ENCODE measurements at regions of chr17 and their contacts with region 1.

Region 1: DNA sequence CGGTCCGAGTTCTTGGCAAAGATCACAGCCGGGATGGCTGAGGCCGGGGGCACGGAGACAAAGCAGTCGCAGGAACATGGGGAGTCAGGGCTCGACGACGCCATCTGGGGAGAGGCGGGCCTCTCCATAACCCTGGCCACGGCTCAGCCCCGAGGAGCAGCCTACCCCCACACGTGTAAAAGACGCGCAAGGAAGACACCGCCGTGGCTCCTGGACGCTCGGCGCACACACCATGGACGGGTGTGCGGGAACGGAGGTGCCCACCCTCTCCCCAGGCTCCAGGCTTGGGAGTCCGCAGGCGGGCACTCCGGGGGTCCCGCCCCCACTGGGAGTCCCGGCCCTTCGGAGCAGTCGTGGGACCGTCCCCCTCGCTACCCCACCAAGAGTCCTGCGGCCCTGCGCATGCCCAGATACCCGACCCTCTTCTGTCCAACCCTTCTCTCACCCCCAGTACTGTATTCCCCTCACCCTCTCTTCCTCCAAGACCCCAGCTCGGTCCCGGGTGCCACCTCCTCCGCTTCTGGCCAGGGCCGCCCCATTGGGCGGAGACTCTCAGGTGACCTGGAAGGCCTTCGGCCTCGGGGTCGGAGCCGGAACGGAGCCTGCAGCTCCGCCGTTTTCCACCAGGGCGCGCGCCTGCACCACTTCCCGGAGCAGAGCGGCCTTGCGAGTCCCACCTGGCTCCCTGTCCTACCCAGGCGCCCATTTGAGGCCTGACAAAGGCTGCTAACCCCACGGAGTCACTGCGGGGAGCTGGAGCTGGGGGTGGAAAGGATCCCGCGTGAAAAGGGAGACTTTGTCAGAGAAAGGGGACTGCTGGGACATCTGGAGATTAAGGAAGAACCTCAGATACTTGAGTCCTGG is at the start of gene SCRN2:
- DNase-seq: peak; percentile 97
- H3K4me3 ChIP-seq: peak within 1 kb of the TSS; percentile 94 to 96
- H3K27ac ChIP-seq: peak within 1 kb of the TSS; percentile 29 to 89; a peak in 3 of 4 replicates
- H3K4me1 ChIP-seq: peaks cover 8 to 30% of the 10 kb centered on the region in 2 experiments; a peak in 2 of 4 replicates
- H3K27me3 ChIP-seq: peaks cover 10% of the 10 kb centered on the region
- CTCF ChIP-seq: peak; percentile 99
- EP300 ChIP-seq: no peak; a peak in 1 of 4 replicates
- RAD21 ChIP-seq: peak; percentile 97
- polyA plus RNA-seq, gene SCRN2: 135 and 139 TPM in 2 replicates

Region 2: GRCh38 chr17:47872021-47872650 is 31.2 kb after region 1 on chr17:
- CTCF ChIA-PET with region 1: interaction called, 108 read pairs
- POLR2A ChIA-PET with region 1: no interaction called
- DNase-seq: no peak
- H3K4me3 ChIP-seq: no peak overlapping the region
- H3K27ac ChIP-seq: no peak overlapping the region
- H3K4me1 ChIP-seq: no peaks in the 10 kb centered on the region
- H3K27me3 ChIP-seq: peaks cover 61% of the 10 kb centered on the region
- CTCF ChIP-seq: no peak
- EP300 ChIP-seq: no peak
- RAD21 ChIP-seq: no peak

Region 3: GRCh38 chr17:47895856-47896671 is 55.1 kb after region 1 on chr17 and contains the start of gene SP2:
- CTCF ChIA-PET with region 1: interaction called, 1,447 read pairs
- POLR2A ChIA-PET with region 1: interaction called, 26 read pairs
- DNase-seq: peak; percentile 99
- H3K4me3 ChIP-seq: peak within 1 kb of the TSS; percentile 94
- H3K27ac ChIP-seq: peak within 1 kb of the TSS; percentile 88 to 94
- H3K4me1 ChIP-seq: peaks cover 4 to 19% of the 10 kb centered on the region in 2 experiments; a peak in 3 of 4 replicates
- H3K27me3 ChIP-seq: no peaks in the 10 kb centered on the region
- CTCF ChIP-seq: no peak
- EP300 ChIP-seq: no peak; a peak in 1 of 4 replicates
- RAD21 ChIP-seq: no peak
- polyA plus RNA-seq, gene SP2: 8.8 and 16.7 TPM in 2 replicates

Region 4: DNA sequence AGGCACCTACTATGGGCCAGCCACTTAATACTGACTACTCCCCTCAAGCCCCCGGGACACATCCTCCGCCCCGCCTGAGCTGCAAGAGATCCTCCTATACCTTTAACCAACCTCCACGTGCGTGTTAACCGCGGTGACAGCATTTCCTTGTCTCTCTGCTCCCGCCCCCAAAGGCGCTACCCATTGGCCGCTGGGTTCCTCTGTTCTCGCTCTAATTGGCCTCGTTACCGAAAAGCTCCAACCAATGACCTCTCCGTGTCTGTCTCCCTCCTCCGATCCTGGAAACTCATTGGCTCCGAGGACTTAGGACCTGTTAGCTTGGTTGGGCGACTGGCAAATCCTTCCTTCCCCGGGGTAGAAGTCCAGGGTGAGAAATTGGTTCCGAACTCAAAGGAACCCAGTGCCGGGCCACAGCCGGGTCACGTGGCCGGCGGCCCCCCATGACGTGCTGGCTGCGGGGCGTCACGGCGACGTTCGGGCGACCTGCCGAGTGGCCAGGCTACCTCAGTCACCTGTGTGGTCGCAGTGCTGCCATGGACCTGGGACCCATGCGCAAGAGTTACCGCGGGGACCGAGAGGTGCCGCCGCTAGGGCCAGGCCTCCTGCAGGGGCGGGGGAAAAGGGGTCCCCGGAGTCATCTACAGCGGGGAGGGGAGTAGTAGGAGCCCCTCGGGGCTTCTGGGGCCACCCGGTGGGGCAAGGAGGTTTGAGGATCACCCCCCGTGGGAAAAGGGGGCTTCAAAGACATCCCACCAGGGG is 100.4 kb after region 1 on chr17 and contains the start of gene PNPO:
- CTCF ChIA-PET with region 1: interaction called, 21 read pairs
- POLR2A ChIA-PET with region 1: interaction called, 4 read pairs
- DNase-seq: peak; percentile 98
- H3K4me3 ChIP-seq: peak within 1 kb of the TSS; percentile 76 to 78
- H3K27ac ChIP-seq: peak within 1 kb of the TSS in 1 of 2 experiments; percentile 73; a peak in 3 of 4 replicates
- H3K4me1 ChIP-seq: peaks cover 6 to 17% of the 10 kb centered on the region in 2 experiments; a peak in 3 of 4 replicates
- H3K27me3 ChIP-seq: no peaks in the 10 kb centered on the region
- CTCF ChIP-seq: no peak; the same call in 1 of the 2 replicates
- EP300 ChIP-seq: peak in 1 of 2 experiments; percentile 54; a peak in 1 of 4 replicates
- RAD21 ChIP-seq: no peak
- polyA plus RNA-seq, gene PNPO: 26.1 and 33.8 TPM in 2 replicates

Region 5: DNA sequence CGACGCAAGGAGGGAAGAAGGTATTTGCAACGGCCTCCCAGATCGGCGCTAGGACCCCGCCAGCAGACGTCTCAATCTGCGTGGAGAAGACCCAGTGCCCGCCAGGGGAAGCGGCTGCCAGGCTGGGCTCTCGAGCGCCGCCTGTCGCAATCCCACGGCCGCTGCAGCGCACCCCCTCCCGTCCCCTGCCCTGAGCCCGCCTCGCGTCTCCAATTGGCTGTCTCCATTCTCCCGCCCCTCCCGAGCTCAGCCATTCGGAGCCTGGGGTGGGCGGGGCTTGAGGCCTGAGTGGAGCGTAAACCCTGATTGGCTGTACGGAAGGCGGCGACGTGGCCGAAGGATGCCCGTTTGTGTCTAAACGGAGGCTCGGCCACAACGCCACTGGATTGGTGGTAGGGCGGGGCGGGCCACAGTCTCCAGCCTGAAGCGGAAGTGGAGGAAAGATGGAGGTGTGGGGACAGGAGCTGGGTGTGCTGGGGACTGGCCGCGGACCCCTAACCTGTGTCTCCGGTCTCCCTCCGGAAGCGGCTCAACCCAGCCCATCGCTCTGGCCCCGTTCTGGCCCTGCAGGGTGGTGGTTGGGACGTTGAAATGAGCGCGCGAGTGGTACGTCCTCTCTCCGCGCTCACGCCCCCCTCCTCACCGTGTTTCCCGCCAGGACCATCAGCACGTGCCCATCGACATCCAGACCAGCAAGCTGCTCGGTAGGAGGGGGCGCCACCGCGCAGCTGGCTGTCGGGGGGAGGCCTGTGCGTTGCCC is 129.9 kb after region 1 on chr17 and contains the start of gene CDK5RAP3:
- CTCF ChIA-PET with region 1: interaction called, 19 read pairs
- POLR2A ChIA-PET with region 1: no interaction called
- DNase-seq: peak; percentile 99
- H3K4me3 ChIP-seq: peak within 1 kb of the TSS; percentile 79 to 90
- H3K27ac ChIP-seq: peak within 1 kb of the TSS; percentile 54 to 83
- H3K4me1 ChIP-seq: peaks cover 20 to 25% of the 10 kb centered on the region in 2 experiments; a peak in 3 of 4 replicates
- H3K27me3 ChIP-seq: no peaks in the 10 kb centered on the region
- CTCF ChIP-seq: peak; percentile 99
- EP300 ChIP-seq: no peak; a peak in 1 of 4 replicates
- RAD21 ChIP-seq: peak; percentile 69
- polyA plus RNA-seq, gene CDK5RAP3: 208 and 288 TPM in 2 replicates

Region 6: DNA sequence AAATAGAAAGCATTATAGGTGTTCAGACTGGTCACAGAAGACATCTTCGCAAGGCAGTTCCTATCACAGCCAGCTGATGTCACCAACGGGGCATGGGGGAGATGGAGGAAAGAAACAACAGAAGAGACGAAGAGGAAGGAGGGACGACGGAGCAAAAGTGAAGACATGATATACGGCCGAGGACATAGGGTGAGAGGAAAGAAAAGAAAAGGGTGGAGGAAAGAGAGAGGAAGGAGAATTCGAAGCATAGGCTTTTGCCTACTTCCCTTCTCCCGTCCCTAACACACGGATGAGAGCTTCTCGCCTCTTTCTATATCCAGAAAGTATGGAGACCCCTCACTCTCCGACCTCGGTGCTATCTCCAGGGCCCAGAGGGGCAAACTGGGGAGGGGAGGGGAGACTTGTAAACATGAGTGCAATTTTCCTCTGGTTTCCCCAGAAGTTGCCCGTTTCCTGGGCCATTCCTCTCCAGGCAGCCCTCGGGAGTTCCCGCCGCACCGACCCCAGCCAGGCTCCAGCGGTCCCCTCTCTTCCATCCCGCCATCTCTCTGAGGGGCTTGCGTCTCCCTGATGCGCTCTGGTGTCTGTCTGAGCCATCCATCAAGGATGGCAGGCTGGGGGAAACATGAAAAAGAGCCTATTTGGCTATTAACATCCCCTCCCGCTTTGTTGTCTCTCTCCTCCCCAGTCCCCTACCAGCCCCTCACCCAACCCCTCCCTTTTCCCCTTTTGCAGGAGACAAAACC is 170.6 kb after region 1 on chr17:
- CTCF ChIA-PET with region 1: interaction called, 34 read pairs
- POLR2A ChIA-PET with region 1: no interaction called
- DNase-seq: peak; percentile 59
- H3K4me3 ChIP-seq: peak overlapping the region; percentile 42 to 51
- H3K27ac ChIP-seq: peak overlapping the region in 1 of 2 experiments; percentile 100; a peak in 3 of 4 replicates
- H3K4me1 ChIP-seq: peaks cover 15 to 54% of the 10 kb centered on the region in 2 experiments
- H3K27me3 ChIP-seq: no peaks in the 10 kb centered on the region
- CTCF ChIP-seq: peak; percentile 57
- EP300 ChIP-seq: no peak
- RAD21 ChIP-seq: peak; percentile 68